ENCODE measurements at regions of chr9 and their contacts with region 1.

Region 1: DNA sequence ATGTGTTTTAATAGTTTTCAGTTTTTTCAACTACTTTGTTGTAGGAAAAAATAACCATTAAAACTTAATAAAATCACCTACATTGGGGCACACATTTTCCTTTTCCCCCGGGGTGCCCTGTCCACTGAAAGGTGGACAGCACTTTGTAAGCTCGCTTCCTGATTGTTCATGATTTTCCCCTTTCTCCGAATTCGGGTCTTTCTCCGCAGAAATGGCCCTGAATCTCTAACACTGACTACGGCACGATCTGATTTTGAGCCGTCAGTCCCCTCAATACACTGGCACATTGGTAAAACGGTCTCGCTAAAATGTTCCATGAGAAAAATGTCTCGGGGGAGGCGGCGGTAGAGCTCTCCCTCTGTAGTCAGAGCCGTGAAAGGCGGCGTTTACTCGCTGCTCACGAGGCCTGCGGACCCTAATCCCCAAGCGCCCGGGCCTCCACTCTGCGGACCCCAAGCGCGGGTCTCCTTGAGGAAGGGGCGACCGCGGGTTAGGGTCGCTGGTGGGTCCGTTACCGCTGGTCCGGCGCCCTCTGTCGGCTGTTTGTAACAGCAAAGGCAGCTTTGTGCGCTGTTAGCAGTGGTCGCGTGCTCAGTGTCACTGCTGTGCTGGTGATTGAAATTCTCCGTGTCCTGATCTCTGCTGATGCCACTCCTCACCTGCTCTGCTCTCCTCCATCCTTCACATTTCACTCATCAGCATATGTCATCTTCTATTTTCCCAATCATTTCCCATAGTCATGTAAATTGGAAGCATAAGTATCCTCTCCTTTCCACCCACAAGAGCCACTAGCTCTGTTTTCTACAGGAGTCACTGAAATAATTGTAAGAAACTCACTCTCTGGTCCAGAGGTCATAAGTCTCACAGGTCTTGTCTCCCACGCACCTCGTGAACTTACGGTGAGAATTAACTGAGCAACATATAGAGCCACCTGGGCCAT is 10.8 kb upstream of the IFNA2 start:
- DNase-seq: peak; percentile 39 to 66
- ATAC-seq: peak; percentile 46 to 88 (median 70)
- H3K4me3 ChIP-seq: peak overlapping the region; percentile 71
- H3K27ac ChIP-seq: no peak overlapping the region
- H3K4me1 ChIP-seq: no peaks in the 10 kb centered on the region
- H3K27me3 ChIP-seq: peaks cover 0 to 11% (median 0%) of the 10 kb centered on the region in 3 donors
- CTCF ChIP-seq: peak; percentile 82

Region 2: DNA sequence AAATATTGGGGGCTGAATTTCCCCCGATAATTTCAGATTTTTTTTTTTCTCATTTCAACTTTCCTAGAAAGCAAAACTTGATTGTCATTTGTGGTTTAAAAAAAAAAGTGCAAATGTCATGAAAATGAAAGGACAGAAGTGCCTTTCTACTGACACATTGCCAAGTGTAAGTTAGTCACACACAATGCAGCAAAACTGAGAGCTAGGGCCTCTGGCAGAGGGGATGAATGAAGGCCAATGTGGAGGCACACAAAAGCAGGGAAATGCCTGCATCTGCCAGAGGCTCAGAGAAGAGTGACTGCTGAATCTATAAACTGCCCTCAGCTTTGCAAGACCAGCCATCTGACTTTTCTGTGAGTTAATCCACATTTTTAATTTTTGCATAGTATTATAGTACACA is 84.2 kb before region 1 on chr9:
- intact Hi-C with region 1: no loop called
- DNase-seq: no peak
- ATAC-seq: no peak
- H3K4me3 ChIP-seq: no peak overlapping the region
- H3K27ac ChIP-seq: no peak overlapping the region
- H3K4me1 ChIP-seq: no peaks in the 10 kb centered on the region
- H3K27me3 ChIP-seq: peaks cover 0 to 3% (median 0%) of the 10 kb centered on the region in 3 donors
- CTCF ChIP-seq: no peak

Region 3: DNA sequence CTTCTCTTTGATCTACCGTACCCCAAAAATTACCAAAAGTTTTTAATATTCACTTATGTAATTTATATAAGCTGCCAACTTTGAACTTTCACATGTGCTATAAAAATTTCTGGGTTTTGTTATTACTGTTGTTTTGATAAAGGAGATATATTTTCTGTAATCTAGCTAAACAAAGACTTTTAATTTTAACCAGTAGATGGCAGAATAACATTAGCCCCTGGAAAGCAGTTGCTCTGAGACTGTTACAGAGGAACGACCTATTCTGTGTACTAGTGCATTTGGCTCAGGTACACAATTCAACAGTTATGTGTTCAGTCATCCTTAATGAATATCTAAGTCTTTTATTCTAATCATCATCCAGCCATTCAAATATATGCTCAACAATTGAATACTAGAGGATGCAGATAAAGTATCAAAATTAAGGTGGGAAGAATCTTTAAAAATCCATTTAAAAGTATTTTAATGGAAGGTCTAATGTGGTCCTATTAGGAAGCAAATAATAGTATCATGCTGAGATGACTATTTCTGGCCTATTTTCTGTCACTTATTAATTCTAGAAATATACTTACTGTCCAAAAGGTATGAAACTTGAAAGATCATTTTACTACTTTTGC is 69.4 kb before region 1 on chr9:
- intact Hi-C with region 1: loop called (anchors 5 kb)
- DNase-seq: no peak
- ATAC-seq: peak; percentile 61 to 90 (median 70)
- H3K4me3 ChIP-seq: no peak overlapping the region
- H3K27ac ChIP-seq: no peak overlapping the region
- H3K4me1 ChIP-seq: peaks cover 41% of the 10 kb centered on the region
- H3K27me3 ChIP-seq: no peaks in the 10 kb centered on the region
- CTCF ChIP-seq: peak; percentile 72

Region 4: DNA sequence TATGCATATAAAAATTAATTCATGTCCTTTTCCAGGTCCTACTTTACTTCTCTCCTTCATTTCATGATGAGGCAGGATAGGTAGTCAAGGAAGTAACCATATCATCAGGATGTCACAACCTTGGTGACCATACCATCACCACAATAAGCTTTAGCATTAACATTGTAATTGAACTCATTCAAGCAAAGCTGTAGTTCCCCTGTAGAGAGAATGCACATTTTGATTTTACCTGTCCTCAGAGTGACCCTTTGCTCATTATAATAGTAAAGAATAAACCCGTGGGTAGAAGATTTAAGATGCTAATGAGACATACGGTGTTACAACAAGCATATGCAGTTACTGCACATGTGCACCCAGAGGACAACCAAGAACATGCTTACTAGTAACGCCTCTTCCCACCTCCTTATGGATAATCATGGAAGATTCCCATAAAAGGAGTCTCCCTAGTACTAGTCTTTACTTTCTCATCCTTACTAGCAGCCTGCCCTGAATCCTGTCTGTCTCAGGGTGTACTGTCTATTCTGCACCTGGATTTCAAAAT is 47.5 kb before region 1 on chr9:
- intact Hi-C with region 1: loop called in 1 of 2 experiments (anchors 5 kb)
- DNase-seq: no peak
- ATAC-seq: no peak
- H3K4me3 ChIP-seq: no peak overlapping the region
- H3K27ac ChIP-seq: no peak overlapping the region
- H3K4me1 ChIP-seq: no peaks in the 10 kb centered on the region
- H3K27me3 ChIP-seq: peaks cover 0 to 4% (median 0%) of the 10 kb centered on the region in 3 donors
- CTCF ChIP-seq: no peak

Region 5: GRCh38 chr9:21549251-21549765 is 153.3 kb after region 1 on chr9:
- intact Hi-C with region 1: no loop called
- DNase-seq: no peak
- ATAC-seq: peak in 1 of 4 donors; percentile 37
- H3K4me3 ChIP-seq: no peak overlapping the region
- H3K27ac ChIP-seq: no peak overlapping the region
- H3K4me1 ChIP-seq: no peaks in the 10 kb centered on the region
- H3K27me3 ChIP-seq: peaks cover 0 to 10% (median 5%) of the 10 kb centered on the region in 3 donors
- CTCF ChIP-seq: no peak

Region 6: GRCh38 chr9:21802195-21803000 is 406.4 kb after region 1 on chr9 and contains the start of gene MTAP:
- intact Hi-C with region 1: no loop called
- DNase-seq: peak; percentile 90 to 93
- ATAC-seq: peak; percentile 95 to 97 (median 96)
- H3K4me3 ChIP-seq: peak within 1 kb of the TSS; percentile 69
- H3K27ac ChIP-seq: peak within 1 kb of the TSS; percentile 85
- H3K4me1 ChIP-seq: peaks cover 10% of the 10 kb centered on the region
- H3K27me3 ChIP-seq: no peaks in the 10 kb centered on the region
- CTCF ChIP-seq: no peak
- total RNA-seq, gene MTAP: 11.0 to 16.6 (median 14.9) TPM